ENCODE measurements at regions of chr2 and their contacts with region 1.

Region 1: GRCh38 chr2:200811336-200812121 is at the start of gene BZW1:
- H3K4me3 Mint-ChIP-seq: peak within 1 kb of the TSS; percentile 97
- H3K27ac Mint-ChIP-seq: peak within 1 kb of the TSS; percentile 99
- H3K4me1 Mint-ChIP-seq: peaks cover 52% of the 10 kb centered on the region
- H3K27me3 Mint-ChIP-seq: no peaks in the 10 kb centered on the region

Region 2: DNA sequence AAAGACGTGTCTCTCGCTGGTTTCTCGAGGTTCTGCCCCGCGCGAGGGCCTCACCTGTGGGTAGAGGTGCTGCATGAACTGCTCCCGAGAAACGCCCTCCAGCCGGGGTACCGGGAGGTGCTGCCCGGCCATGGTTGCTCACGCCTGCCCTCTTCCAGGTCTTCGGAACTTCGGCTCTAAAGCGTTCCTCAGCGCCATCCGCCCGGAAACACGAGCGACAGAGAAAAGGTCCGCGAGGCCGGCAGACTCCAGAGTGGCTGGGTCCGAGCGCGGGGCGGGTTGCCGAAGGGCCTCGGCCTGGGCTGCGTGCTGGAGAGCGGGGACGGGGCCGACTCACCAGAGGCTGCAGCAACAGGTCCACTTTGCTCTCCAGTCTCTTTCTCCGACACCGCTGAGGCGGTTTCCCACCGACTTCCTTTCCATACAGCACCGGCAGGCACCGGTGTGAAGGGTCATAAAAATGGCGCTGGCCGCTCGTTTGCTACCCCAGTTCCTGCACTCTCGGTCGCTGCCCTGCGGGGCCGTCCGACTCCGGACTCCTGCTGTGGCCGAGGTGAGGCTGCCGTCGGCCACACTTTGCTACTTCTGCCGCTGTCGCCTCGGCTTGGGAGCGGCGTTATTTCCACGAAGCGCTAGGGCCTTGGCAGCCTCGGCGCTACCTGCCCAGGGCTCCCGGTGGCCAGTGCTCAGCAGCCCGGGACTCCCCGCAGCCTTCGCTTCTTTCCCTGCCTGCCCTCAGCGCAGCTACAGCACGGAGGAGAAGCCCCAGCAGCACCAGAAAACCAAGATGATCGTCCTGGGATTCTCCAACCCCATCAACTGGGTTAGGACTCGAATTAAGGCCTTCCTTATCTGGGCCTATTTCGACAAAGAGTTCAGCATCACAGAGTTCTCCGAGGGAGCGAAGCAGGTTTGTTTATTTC is 855.9 kb before region 1 on chr2 and contains the starts of genes MAIP1 and TYW5:
- intact Hi-C with region 1: loop called (anchors 5 kb)
- H3K4me3 Mint-ChIP-seq: peak within 1 kb of the TSS; percentile 98
- H3K27ac Mint-ChIP-seq: peak within 1 kb of the TSS; percentile 92
- H3K4me1 Mint-ChIP-seq: peaks cover 40% of the 10 kb centered on the region
- H3K27me3 Mint-ChIP-seq: no peaks in the 10 kb centered on the region

Region 3: GRCh38 chr2:200509612-200510433 is 301.7 kb before region 1 on chr2 and contains the start of gene KCTD18:
- intact Hi-C with region 1: loop called (anchors 5 kb)
- H3K4me3 Mint-ChIP-seq: peak within 1 kb of the TSS; percentile 88
- H3K27ac Mint-ChIP-seq: peak within 1 kb of the TSS; percentile 81
- H3K4me1 Mint-ChIP-seq: peaks cover 19% of the 10 kb centered on the region
- H3K27me3 Mint-ChIP-seq: no peaks in the 10 kb centered on the region

Region 4: DNA sequence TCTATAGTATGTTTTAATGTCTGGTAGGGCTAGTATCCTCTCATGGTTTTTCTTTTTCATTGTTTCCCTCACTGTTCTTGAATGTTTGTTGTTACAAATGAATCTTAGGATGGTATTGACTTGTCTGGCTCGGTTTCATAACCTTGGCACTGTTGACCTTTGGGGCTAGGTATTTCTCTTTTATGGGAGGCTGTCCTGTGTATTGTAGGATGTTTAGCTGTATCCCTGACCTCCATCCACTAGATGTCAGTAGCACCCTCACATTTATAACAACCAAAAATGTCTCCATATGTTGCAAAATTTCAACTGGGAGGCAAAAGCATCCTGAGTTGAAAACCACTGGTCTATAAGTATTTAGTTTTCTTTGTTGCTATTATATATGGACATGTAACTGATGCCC is 232.8 kb before region 1 on chr2:
- intact Hi-C with region 1: loop called (anchors 5 kb)
- H3K4me3 Mint-ChIP-seq: no peak overlapping the region
- H3K27ac Mint-ChIP-seq: no peak overlapping the region
- H3K4me1 Mint-ChIP-seq: no peaks in the 10 kb centered on the region
- H3K27me3 Mint-ChIP-seq: no peaks in the 10 kb centered on the region

Region 5: DNA sequence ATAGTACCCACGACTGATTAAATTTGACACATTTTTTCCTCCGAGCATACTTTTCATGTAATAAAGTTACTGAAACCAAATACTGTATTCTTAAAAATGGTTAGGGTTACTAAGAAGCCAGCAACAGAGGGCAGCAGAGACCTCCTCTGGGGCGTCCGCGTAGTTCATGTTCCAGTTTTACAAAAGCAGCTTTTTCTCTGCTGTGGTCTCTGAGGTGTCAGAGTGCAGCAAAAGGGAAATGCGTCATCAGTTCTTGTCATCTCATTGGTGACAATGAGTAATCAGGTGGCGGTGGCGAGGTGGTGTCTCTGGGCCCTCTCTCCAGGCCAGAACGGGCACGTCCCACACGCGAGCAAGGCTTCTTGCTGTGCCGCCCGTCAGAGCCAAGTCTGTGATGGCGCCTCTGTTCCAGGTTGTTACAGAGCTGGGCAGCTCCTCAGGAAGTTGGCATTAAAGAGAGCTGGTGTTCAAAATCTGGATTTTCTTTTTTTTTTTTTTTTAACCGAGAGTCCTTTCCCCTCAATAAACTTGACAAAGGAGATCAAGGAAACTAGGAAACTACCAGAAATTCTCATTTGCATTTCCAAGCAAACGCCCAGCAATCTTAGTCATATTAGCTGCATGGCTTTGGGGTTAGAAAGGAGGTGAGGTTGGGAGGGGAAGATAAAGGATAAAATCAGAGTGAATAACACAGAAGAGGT is 98.4 kb before region 1 on chr2:
- intact Hi-C with region 1: loop called (anchors 1 kb)
- H3K4me3 Mint-ChIP-seq: peak overlapping the region; percentile 71
- H3K27ac Mint-ChIP-seq: peak overlapping the region; percentile 94
- H3K4me1 Mint-ChIP-seq: peaks cover 10% of the 10 kb centered on the region
- H3K27me3 Mint-ChIP-seq: no peaks in the 10 kb centered on the region

Region 6: DNA sequence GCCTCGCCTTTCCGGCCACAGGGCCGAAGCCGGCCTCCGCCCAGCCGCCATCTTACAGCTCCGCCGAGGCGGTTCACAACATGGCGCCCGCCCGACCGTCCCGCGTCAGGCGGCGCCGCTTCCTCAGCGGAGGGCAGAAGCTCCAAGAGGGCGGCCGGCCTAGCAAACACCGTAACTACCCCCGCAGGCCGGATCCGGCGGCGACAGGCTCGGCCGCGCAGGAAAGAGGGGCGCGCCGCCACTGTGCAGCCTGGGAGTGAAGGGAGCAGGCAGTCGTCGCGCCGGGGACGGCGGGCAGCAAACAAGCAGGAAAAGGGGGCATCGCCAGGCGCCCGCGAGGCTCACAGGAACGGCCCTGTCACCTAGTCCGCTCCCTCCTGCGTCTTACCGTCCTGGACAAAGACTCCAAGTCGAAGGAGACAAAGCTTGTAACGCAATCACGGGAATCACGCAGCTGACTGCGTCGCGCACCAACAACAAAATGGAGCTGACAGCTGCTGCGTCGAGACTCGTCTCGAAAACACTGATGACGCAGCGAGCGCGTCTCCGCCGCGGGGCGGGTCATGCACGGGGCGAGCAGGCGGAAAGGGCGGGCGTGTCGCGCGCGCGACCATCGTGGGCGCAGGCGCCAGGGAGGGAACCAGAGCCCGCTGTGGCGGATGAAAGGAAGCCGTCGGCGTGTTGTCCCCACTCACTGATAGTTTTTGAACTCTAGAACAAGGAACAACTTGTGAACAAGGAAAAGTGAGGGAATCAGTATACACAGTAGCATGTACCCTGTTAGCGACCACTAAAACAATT is 52.8 kb after region 1 on chr2 and contains the start of gene CLK1:
- intact Hi-C with region 1: loop called (anchors 2 kb)
- H3K4me3 Mint-ChIP-seq: peak within 1 kb of the TSS; percentile 100
- H3K27ac Mint-ChIP-seq: peak within 1 kb of the TSS; percentile 99
- H3K4me1 Mint-ChIP-seq: peaks cover 51% of the 10 kb centered on the region
- H3K27me3 Mint-ChIP-seq: no peaks in the 10 kb centered on the region

Region 7: DNA sequence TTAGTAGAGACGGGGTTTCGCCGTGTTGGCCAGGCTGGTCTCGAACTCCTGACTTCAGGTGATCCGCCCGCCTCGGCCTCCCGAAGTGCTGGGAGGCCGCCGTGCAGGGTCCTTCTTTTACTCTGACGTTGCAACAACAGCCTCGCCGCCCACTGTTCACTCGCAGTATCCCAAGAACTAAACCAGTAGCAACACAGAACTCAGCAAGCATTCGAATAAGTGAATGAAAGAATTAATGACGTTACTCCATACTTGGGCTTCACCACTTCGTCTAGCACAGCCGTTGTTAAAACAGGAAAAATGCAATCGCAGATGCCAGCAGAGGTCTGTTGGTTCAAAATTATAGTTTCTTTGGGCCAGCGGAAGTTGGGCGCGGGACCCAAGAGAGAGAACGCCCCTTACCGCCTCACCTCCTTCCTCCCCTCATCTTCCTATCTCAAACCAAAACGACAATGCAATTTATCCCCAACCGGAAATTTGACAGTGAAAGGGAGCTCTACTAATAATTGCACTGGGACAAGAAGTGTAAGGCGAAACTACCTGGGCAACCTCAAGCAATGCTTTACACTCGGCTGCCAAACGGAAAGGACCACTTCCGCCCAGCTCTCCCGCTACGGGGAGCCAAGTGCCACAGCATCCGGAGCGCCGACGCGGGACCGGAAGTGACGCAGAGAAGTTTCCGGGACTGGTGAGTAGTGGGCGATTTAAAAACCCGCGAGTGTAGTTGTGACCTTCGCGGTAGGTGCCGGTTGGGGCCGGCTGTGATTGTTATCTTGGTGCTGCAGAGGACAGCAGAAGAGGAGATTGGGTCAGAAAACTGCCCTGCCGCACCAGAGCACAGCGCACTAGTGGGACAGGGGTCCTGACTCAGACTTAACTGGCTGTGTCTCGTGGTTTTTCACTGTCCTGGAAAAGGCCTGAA is 77.4 kb after region 1 on chr2 and contains the starts of genes NIF3L1 and PPIL3:
- intact Hi-C with region 1: loop called (anchors 2 kb)
- H3K4me3 Mint-ChIP-seq: peak within 1 kb of the TSS; percentile 94
- H3K27ac Mint-ChIP-seq: peak within 1 kb of the TSS; percentile 98
- H3K4me1 Mint-ChIP-seq: peaks cover 45% of the 10 kb centered on the region
- H3K27me3 Mint-ChIP-seq: no peaks in the 10 kb centered on the region

Measured in dendritic cell treated with granulocyte-macrophage colony-stimulating factor and Interleukin-4, amounts not matched to agents 40 ng/mL and 50 ng/mL, for 4 days (primary cell).